SK-N-SH (cell line): ENCODE measurements at regions of chr19 and their contacts with region 1.

Region 1: GRCh38 chr19:1942078-1942933 is 1.3 kb downstream of the CSNK1G2 start:
- DNase-seq: peak; percentile 89
- H3K4me3 ChIP-seq: peak overlapping the region; percentile 56 to 90
- H3K27ac ChIP-seq: peak overlapping the region; percentile 82 to 94
- H3K4me1 ChIP-seq: peaks cover 6 to 27% of the 10 kb centered on the region in 2 experiments; a peak in 3 of 4 replicates
- H3K27me3 ChIP-seq: no peaks in the 10 kb centered on the region
- CTCF ChIP-seq: no peak
- EP300 ChIP-seq: no peak
- RAD21 ChIP-seq: no peak

Region 2: DNA sequence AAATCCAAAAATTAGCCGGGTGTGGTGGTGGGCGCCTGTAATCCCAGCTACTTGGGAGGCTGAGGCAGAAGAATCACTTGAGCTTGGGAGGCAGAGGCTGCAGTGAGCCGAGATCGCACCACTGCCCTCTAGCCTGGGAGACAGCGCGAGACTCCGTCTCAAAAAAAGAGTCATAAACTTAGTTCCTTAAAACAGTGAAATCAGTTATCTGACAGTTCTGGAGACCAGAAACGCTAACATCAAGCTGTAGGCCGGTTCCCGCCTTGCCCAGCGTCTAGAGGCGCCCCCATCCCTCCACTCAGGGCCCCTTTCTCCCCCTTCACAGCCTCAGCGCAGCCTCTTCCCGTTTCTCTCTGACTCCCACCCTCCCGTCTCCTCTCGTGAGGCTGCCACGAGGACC is 25.2 kb before region 1 on chr19:
- CTCF ChIA-PET with region 1: no interaction called
- POLR2A ChIA-PET with region 1: no interaction called
- DNase-seq: no peak
- H3K4me3 ChIP-seq: no peak overlapping the region
- H3K27ac ChIP-seq: no peak overlapping the region
- H3K4me1 ChIP-seq: no peaks in the 10 kb centered on the region
- H3K27me3 ChIP-seq: no peaks in the 10 kb centered on the region
- CTCF ChIP-seq: no peak
- EP300 ChIP-seq: no peak
- RAD21 ChIP-seq: no peak

Region 3: DNA sequence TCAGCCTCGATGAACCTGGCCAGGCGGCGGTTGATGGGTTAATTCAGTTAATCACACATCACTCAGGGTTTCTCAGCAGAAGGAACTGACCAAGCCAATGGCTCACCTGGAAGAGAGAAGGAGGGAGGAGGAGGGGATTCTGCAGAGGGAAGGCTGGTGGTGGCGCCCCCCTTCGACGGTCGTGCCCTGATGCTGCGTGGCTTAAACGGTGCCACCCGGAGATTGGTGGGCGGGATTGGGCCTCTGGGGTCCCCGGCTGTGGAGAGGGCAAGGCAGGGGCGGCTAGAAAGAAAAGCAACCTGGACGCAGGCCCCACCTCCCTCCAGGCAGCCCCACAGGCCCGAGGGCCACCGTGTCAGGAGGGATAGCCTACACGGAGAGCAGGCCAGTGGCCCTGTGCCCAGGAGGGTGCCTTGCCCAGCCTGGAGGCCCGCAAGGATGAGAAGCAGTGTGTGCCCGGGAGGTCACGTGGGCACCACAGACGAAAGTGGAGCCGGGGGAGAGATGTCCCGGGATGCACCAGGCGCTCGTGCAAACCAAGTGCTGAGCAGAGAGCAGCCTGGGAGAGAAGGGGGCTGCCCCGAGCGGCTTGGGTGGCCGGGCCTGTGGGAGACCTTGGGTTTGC is 14.7 kb after region 1 on chr19:
- CTCF ChIA-PET with region 1: interaction called, 24 read pairs
- POLR2A ChIA-PET with region 1: no interaction called
- DNase-seq: no peak
- H3K4me3 ChIP-seq: no peak overlapping the region
- H3K27ac ChIP-seq: no peak overlapping the region
- H3K4me1 ChIP-seq: no peaks in the 10 kb centered on the region; a peak in 1 of 4 replicates
- H3K27me3 ChIP-seq: no peaks in the 10 kb centered on the region
- CTCF ChIP-seq: no peak
- EP300 ChIP-seq: no peak
- RAD21 ChIP-seq: no peak